ENCODE measurements at regions of chr16 and their contacts with region 1.

Region 1: DNA sequence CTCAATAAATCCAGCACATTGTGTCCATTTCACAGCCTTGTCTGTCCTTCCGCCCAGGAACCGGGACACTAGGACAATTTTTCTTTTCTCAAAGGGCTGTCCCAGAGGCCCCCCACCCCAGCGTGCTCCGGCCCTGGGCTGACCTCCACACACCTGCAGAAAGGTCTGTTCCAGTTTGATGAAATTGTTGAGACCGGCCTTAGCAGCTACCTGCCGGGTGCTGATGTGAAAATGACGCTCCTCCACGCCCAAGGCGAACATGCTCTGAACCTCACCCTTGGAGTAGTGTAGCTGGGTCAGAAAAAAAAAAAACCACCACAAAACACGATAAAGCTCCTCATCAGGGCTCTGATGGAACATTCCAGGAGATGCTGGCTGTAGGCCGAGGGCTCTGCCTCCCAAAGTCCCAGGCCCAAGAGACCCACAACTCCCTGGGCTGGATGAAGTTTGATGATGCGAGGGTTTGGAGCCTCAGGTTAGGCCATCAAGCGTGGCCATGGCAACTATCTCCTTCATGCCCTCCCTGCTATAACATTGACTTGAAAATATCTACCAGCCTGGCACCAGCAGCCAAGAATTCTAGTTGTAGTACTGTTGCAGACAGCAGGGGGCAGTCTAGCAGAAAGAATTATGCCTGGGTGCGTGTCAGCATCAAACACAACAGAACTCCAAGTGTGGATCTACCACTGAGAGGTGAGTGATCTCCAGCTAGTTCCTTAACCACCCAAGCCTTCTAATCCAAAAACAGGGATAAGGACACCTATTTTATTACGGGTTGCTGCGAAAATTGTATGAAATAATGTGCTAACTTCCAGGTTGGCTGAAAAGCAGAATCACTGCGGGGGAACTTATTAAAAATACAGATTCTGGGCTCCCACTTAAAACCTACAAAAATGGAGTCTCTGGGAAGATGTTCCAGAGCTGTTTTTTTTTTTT is 62.1 kb downstream of the RMI2 start:
- DNase-seq: peak; percentile 81
- ATAC-seq: peak; percentile 74
- H3K4me3 Mint-ChIP-seq: no peak overlapping the region
- H3K27ac Mint-ChIP-seq: no peak overlapping the region
- H3K4me1 Mint-ChIP-seq: no peaks in the 10 kb centered on the region
- H3K27me3 Mint-ChIP-seq: no peaks in the 10 kb centered on the region

Region 2: DNA sequence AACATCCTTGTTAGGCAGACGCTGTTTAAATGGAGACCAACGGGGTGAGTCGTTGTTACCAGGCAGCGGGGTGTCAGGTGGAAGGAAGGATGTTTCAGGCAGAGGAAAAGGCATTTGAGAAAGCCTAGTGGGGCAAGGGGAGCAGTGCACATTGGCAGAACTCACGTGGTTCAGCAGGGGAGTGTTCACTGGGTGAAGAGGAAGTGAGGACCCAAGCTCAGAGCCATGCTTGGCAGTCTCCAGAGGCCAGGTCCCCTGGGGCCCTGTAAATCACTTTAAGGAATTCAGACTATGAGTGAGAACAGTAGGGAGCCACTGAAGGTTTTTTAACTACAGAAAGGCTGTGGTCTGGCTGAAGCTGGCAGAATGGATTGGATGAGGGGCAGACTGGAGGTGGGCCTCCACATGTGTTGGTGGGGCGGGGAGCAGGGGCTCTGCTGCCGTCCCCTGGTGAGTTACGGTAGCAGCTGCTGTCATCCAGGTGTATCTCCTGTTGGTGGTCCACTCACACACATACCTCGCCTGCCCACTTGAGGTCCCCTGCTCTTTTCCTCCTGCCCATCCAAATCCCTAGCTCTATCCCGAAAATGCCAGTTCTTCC is 457.8 kb before region 1 on chr16:
- CTCF ChIA-PET with region 1: interaction called, 15 read pairs
- POLR2A ChIA-PET with region 1: no interaction called
- intact Hi-C with region 1: loop called in 1 of 2 experiments (anchors 2 kb)
- DNase-seq: peak; percentile 69
- ATAC-seq: peak; percentile 81
- H3K4me3 Mint-ChIP-seq: no peak overlapping the region
- H3K27ac Mint-ChIP-seq: peak overlapping the region; percentile 70
- H3K4me1 Mint-ChIP-seq: peaks cover 63% of the 10 kb centered on the region
- H3K27me3 Mint-ChIP-seq: no peaks in the 10 kb centered on the region

Region 3: DNA sequence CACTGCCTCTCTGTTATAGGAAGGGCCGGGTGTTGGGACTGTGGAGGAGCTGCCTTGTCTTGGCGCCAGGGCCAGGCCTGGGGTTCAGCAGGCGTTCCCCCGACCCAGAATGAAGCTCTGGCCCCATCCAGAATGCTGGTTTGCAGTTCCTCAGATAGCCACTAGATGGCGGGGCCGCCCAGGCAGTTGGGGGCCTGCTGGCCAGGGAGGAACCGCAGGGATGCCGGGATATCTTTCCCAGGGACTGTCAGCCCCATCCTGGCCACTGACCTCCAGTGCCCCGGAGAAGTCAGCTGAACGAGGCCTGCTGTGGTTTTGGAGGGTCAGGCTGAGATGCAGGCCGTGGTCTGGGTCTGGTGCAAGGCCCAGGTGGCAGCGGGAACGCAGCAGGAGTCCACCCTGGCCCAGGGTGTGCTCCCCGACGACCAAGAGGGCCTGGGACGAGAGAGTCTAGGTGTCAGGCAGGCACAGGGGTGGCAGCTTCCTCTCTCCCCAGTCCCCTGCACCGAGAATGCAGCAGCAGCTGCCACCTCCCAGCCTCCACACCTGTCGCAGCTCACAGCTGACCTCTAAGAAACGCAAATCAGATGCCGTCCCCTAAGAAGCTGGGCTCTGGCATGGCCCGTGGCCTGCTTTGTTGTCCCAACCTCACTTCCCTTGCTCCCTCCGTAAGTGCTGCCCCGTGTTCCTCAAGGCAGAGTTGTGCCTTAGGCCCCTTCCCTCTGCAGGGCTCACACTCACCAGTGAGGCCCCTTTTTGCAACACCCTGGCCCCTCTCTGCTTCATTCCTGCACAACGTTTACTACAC is 10.9 kb before region 1 on chr16:
- CTCF ChIA-PET with region 1: interaction called, 23 read pairs
- POLR2A ChIA-PET with region 1: interaction called, 3 read pairs
- intact Hi-C with region 1: no loop called
- DNase-seq: peak; percentile 82
- ATAC-seq: peak; percentile 88
- H3K4me3 Mint-ChIP-seq: no peak overlapping the region
- H3K27ac Mint-ChIP-seq: no peak overlapping the region
- H3K4me1 Mint-ChIP-seq: no peaks in the 10 kb centered on the region
- H3K27me3 Mint-ChIP-seq: no peaks in the 10 kb centered on the region

Region 4: GRCh38 chr16:11639925-11640899 is 232.9 kb after region 1 on chr16:
- CTCF ChIA-PET with region 1: interaction called, 4 read pairs
- POLR2A ChIA-PET with region 1: no interaction called
- intact Hi-C with region 1: loop called (anchors 1 kb)
- DNase-seq: no peak
- ATAC-seq: no peak
- H3K4me3 Mint-ChIP-seq: no peak overlapping the region
- H3K27ac Mint-ChIP-seq: no peak overlapping the region
- H3K4me1 Mint-ChIP-seq: peaks cover 8% of the 10 kb centered on the region
- H3K27me3 Mint-ChIP-seq: no peaks in the 10 kb centered on the region

Region 5: DNA sequence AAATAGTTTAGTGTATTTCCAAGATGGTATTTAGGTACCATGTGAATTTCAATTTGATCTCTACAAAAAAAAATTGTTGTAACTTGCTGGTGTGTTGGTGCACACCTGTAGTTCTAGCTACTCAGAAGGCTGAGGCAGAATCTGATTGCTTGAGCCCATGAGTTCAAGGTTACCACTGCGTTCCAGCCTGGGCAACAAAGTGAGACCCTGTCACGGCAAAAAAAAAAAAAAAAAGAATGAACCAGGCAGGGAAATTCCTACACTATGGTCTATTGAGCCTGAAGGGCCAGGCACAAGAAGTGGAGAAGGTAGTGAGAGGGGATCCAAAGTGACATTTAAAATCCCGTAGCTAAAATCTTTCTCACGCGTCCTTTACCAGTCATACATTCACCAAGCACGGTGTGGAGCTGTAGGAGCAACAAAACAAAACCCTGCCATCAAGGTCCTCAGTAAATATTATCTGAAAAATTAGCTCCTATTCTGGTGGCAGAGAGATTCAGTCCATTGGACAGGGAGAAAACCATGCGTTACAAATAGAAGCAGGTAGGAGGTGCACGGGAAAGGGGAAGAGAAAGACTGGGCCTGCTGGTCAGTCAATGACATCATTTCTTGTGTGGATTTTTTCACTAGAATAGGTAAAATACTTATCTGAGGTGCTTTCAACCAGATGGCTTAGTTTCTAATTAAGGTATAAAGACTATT is 308.1 kb after region 1 on chr16:
- CTCF ChIA-PET with region 1: interaction called, 7 read pairs
- POLR2A ChIA-PET with region 1: no interaction called
- intact Hi-C with region 1: loop called in 1 of 2 experiments (anchors 1 kb)
- DNase-seq: no peak
- ATAC-seq: no peak
- H3K4me3 Mint-ChIP-seq: no peak overlapping the region
- H3K27ac Mint-ChIP-seq: no peak overlapping the region
- H3K4me1 Mint-ChIP-seq: peaks cover 6% of the 10 kb centered on the region
- H3K27me3 Mint-ChIP-seq: no peaks in the 10 kb centered on the region

Region 6: DNA sequence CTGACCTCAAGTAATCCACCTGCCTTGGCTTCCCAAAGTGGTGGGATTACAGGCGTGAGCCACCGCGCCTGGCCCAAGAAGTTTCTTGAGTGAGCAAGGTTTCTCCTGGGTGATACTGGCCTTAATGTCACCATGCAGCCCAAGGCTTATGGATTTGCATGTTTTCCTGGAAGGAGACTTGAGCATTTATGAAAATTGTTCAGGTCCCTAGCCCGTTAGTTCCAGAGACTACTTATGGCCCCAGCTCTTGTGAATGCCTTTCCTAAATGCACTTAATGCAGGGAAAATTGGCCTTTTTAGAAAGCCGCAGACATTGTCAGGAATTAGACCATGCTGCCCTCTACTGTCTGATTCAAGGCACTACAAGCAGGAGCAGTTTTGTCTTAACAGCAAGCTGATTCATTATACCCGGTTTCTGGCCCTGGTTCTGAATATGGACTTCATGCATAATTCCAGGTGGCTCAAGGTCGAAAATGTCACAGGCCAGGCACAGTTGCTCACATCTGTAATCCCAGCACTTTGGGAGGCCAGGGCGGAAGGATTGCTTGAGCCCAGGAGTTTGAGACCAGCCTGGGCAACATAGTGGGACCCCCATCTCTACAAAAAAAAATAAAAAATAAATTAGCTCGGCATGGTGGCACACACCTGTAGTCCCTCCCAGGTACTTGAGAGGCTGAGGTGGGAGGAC is 660.5 kb after region 1 on chr16:
- CTCF ChIA-PET with region 1: no interaction called
- POLR2A ChIA-PET with region 1: no interaction called
- intact Hi-C with region 1: loop called in 1 of 2 experiments (anchors 1 kb)
- DNase-seq: peak; percentile 67
- ATAC-seq: peak; percentile 83
- H3K4me3 Mint-ChIP-seq: no peak overlapping the region
- H3K27ac Mint-ChIP-seq: no peak overlapping the region
- H3K4me1 Mint-ChIP-seq: no peaks in the 10 kb centered on the region
- H3K27me3 Mint-ChIP-seq: no peaks in the 10 kb centered on the region